Head of caudate nucleus (tissue), 42 donors: ENCODE measurements at regions of chr2 and their contacts with region 1.

Region 1: DNA sequence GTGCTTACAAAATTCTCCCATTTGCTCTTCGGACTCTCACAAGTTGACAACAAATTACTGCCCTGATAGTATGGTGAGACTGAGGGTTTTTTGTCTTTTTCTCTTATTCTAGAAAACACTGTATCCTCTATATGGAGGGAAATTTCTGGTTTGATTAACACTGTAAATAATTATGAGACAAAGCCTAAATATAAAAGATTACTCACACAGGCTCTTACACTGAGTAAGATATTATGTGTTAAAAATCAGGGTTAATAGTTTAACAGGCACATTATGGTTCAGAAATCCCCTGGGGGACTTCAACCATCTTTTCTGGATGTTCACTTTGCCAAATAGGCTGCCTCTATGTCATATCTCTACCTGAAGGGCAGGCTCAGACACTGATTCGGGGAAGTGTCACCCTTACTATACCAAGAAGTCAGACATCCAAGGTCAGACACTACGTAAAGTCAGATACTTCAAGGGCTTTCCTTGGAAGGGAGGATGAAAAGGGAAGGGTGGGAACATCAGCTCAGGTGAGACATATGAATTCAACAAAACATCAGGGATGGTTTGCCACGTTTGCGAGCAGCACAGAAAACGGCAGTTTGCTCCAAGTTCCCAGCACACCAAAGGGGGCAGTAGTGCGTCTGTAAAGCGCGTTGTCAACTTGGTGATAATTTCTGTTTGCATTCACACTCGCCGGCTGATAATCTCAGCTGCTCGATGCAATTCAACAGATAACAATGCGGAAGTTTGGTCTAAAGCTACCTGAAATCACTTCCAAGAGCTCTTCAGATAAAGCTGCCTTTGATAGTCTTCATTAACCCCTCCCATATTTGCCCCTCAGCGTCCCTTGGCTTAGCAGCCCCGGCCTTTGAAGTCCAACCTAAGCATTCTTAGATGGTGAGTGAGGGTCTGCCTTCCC is 972 bp upstream of the RASGRP3 start:
- DNase-seq: peak; percentile 64 to 95 (median 86)

Region 2: DNA sequence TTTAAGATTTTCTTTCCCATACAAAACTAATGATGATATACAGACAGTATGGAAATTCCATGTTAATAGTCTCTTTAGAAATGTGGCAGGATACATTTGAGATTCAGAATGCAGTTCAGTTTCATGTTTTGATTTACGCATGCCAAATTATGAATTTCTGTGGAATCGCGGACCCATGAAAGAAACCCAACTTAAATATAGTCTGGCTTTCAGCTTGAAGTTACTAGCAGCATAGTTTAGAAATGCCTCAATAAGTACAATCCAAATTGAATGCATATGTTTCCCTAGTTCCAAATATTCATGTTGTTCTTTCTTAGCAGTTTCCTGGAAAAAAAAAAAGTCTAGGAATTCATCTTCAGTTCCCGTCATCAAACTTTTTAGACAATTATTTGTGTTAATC is 163.1 kb before region 1 on chr2:
- intact Hi-C with region 1: no loop called
- DNase-seq: no peak

Region 3: GRCh38 chr2:33583194-33583938 is 107.9 kb after region 1 on chr2:
- intact Hi-C with region 1: loop called (anchors 2 kb)
- DNase-seq: peak in 28 of 42 donors; percentile 18 to 81 (median 53)

Region 4: DNA sequence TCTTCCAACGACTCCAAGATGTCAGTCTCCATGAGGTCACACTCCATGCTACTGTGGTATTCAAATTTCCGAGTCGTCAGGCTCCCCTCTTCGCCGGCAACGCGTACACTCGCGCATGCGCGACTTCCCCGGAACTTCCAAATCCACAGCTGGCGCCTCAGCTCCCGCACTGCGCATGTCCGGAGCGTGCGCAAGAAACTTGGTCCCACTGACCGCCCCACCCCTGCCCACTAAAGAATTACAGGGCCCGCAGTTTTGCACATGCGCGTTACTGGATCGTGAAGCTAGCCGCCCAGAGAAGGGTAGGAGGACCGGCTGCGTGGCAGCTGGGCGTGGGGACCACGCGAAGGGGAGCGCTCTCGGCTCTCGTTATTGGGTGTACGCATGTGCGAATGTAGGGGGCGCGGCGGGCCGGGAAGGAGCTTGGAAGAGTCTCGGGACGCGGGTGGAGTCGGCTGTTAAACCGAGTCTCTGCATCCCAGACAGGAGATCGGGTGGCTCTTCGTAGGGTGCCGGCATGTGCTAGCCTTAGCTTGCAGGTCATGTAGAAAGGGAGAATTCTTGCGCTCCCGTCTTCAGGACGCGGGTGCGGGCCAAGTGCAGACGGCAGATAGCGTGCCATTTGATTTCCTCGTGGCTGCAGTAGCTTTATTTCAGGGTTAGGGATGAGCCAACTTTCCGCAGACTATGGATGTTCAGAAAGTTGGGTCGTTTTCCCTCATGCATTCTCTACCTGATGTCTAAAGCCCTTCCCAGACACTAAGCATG is 123.9 kb after region 1 on chr2 and contains the start of gene FAM98A:
- intact Hi-C with region 1: loop called (anchors 5 kb)
- DNase-seq: peak; percentile 95 to 99 (median 98)